PC-3 (cell line): ENCODE measurements at regions of chr5 and their contacts with region 1.

Region 1: GRCh38 chr5:99054972-99055371 is 126.2 kb upstream of the CHD1 start:
- DNase-seq: no peak
- ATAC-seq: no peak
- H3K4me3 ChIP-seq: no peak overlapping the region
- H3K27ac ChIP-seq: no peak overlapping the region
- H3K4me1 ChIP-seq: peaks cover 3% of the 10 kb centered on the region; the same call in 1 of the 2 replicates
- H3K27me3 ChIP-seq: no peaks in the 10 kb centered on the region
- CTCF ChIP-seq: no peak

Region 2: GRCh38 chr5:98787131-98787719 is 267.7 kb before region 1 on chr5:
- CTCF ChIA-PET with region 1: no interaction called
- POLR2A ChIA-PET with region 1: interaction called, 30 read pairs
- intact Hi-C with region 1: no loop called
- DNase-seq: no peak
- ATAC-seq: no peak
- H3K4me3 ChIP-seq: no peak overlapping the region
- H3K27ac ChIP-seq: peak overlapping the region; percentile 19
- H3K4me1 ChIP-seq: peaks cover 44% of the 10 kb centered on the region
- H3K27me3 ChIP-seq: no peaks in the 10 kb centered on the region
- CTCF ChIP-seq: no peak

Region 3: DNA sequence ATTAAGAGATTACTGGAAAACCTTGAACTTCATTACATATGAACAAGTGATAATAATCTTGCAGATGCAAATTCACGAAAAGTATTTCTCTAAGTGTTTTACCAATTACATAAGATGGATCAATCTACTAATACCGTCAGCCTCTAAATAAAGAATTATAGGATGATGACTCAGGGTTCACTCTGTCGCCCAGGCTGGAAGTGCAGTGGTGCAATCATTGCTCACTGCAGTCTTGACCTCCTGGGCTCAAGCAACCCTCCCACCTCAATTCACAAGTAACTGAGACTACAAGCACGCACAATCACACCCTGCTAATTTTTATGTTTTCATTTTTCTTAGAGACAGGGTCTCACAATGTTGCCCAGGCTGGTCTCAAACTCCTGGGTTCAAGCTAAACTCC is 182.3 kb before region 1 on chr5:
- CTCF ChIA-PET with region 1: no interaction called
- POLR2A ChIA-PET with region 1: interaction called, 10 read pairs
- intact Hi-C with region 1: no loop called
- DNase-seq: peak; percentile 54
- ATAC-seq: peak; percentile 65
- H3K4me3 ChIP-seq: no peak overlapping the region
- H3K27ac ChIP-seq: no peak overlapping the region
- H3K4me1 ChIP-seq: peaks cover 11% of the 10 kb centered on the region; the same call in 1 of the 2 replicates
- H3K27me3 ChIP-seq: no peaks in the 10 kb centered on the region
- CTCF ChIP-seq: no peak

Region 4: GRCh38 chr5:98954392-98955028 is 100.5 kb before region 1 on chr5:
- CTCF ChIA-PET with region 1: no interaction called
- POLR2A ChIA-PET with region 1: no interaction called
- intact Hi-C with region 1: no loop called
- DNase-seq: no peak
- ATAC-seq: no peak
- H3K4me3 ChIP-seq: no peak overlapping the region
- H3K27ac ChIP-seq: no peak overlapping the region
- H3K4me1 ChIP-seq: no peaks in the 10 kb centered on the region
- H3K27me3 ChIP-seq: no peaks in the 10 kb centered on the region
- CTCF ChIP-seq: no peak

Region 5: DNA sequence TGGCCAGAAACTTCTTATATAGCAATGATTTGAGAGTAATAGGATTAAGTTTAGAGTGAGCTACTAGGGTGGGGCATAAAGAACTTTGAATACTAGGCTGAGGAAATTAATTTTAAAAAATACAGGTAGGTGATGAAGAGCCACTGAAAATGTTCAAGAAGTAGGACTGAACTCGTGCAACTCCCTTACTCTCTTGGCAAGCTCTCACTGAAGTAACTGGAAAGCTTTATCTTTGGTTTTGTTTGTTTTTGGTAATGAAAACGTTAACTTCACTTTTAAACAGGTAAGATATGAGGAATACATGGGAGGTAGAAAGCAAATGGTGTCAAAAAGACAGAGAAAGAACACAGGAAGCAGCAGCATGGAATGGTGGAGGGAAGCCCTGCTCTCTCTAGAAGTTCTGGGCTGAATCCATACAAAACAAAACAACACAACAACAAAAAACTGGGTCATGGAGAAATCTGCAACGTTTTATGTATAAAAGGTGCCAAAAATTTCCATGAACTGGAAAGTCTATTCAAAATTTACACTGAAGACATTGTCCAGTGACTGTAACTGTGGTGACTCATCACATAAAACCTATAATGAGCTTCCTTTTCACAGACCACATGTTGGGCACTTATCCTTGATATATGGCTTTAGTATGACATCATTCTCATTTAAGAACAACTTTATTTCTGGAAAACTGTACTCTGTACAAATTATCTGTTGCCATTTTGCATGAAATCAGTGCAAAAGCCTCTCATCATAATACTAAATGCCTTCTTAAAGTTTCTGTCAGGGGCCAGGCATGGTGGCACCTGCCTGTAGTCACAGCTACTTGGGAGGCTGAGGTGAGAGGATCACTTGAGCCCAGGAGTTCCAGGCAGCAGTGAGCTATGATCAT is 34.9 kb before region 1 on chr5:
- CTCF ChIA-PET with region 1: no interaction called
- POLR2A ChIA-PET with region 1: no interaction called
- intact Hi-C with region 1: no loop called
- DNase-seq: peak; percentile 94
- ATAC-seq: peak; percentile 95
- H3K4me3 ChIP-seq: no peak overlapping the region
- H3K27ac ChIP-seq: no peak overlapping the region
- H3K4me1 ChIP-seq: peaks cover 18% of the 10 kb centered on the region
- H3K27me3 ChIP-seq: no peaks in the 10 kb centered on the region
- CTCF ChIP-seq: no peak

Region 6: GRCh38 chr5:99553211-99553810 is 498.3 kb after region 1 on chr5:
- CTCF ChIA-PET with region 1: no interaction called
- POLR2A ChIA-PET with region 1: no interaction called
- intact Hi-C with region 1: no loop called
- DNase-seq: no peak
- ATAC-seq: no peak
- H3K4me3 ChIP-seq: no peak overlapping the region
- H3K27ac ChIP-seq: no peak overlapping the region
- H3K4me1 ChIP-seq: no peaks in the 10 kb centered on the region
- H3K27me3 ChIP-seq: 0 out of 2 replicates have a peak, but pooled peaks cover 3% of the 10 kb centered on the region
- CTCF ChIP-seq: no peak